CD4-positive, alpha-beta memory T cell (primary cell): ENCODE measurements at regions of chr13 and their contacts with region 1.

Region 1: GRCh38 chr13:37074703-37075102 is 15.2 kb upstream of the SUPT20H start:
- DNase-seq: peak in 4 of 5 donors; percentile 5 to 23 (median 12)
- H3K4me3 ChIP-seq: no peak overlapping the region
- H3K4me3 Mint-ChIP-seq: no peak overlapping the region
- H3K27ac ChIP-seq: no peak overlapping the region
- H3K27ac Mint-ChIP-seq: no peak overlapping the region
- H3K4me1 ChIP-seq: no peaks in the 10 kb centered on the region
- H3K4me1 Mint-ChIP-seq: no peaks in the 10 kb centered on the region
- H3K27me3 ChIP-seq: no peaks in the 10 kb centered on the region
- H3K27me3 Mint-ChIP-seq: peaks cover 0 to 2% of the 10 kb centered on the region in 2 donors

Region 2: GRCh38 chr13:37173214-37173613 is 98.5 kb after region 1 on chr13:
- CTCF ChIA-PET with region 1: no interaction called
- POLR2A ChIA-PET with region 1: no interaction called
- intact Hi-C with region 1: no loop called
- DNase-seq: no peak
- H3K4me3 ChIP-seq: no peak overlapping the region
- H3K4me3 Mint-ChIP-seq: no peak overlapping the region
- H3K27ac ChIP-seq: no peak overlapping the region
- H3K27ac Mint-ChIP-seq: no peak overlapping the region
- H3K4me1 ChIP-seq: no peaks in the 10 kb centered on the region
- H3K4me1 Mint-ChIP-seq: no peaks in the 10 kb centered on the region
- H3K27me3 ChIP-seq: no peaks in the 10 kb centered on the region
- H3K27me3 Mint-ChIP-seq: no peaks in the 10 kb centered on the region

Region 3: DNA sequence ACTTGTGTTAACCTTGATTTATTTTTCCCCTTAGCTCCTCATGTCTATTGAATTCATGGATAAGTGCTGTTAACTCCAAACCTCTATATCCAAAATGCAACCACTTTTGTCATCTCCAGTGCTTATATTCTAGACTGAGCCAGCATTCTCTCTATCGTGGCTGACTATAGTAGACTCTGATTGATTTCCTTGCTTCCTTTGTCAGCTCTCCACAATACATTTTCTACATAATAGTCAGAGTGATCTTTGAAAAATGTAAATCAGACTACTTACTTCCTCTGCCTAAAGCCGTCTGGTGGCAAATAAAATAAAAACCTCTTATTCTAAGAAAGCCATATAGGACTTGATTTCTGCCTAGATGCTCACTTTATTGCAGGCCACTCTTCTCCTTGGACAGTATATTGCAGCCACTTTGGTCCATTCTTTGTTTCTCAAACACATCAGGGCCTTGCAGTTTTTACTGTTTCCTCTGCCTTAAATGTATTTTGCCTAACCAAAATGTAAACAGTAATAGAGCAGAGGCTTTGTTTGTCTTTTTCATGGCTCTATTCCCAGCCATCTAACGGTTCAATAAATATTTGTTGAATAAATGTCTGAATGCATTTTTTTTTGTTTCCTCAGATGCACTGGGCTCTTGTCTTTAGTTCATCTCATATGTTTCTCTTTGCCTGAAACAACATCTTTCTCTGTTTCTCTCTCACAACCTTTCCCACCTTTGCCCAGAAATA is 274.4 kb after region 1 on chr13:
- CTCF ChIA-PET with region 1: no interaction called
- POLR2A ChIA-PET with region 1: no interaction called
- intact Hi-C with region 1: no loop called
- DNase-seq: no peak
- H3K4me3 ChIP-seq: no peak overlapping the region
- H3K4me3 Mint-ChIP-seq: no peak overlapping the region
- H3K27ac ChIP-seq: no peak overlapping the region
- H3K27ac Mint-ChIP-seq: no peak overlapping the region
- H3K4me1 ChIP-seq: no peaks in the 10 kb centered on the region
- H3K4me1 Mint-ChIP-seq: no peaks in the 10 kb centered on the region
- H3K27me3 ChIP-seq: no peaks in the 10 kb centered on the region
- H3K27me3 Mint-ChIP-seq: no peaks in the 10 kb centered on the region

Region 4: GRCh38 chr13:38763439-38764381 is 1689.0 kb after region 1 on chr13:
- CTCF ChIA-PET with region 1: no interaction called
- POLR2A ChIA-PET with region 1: no interaction called
- intact Hi-C with region 1: loop called (anchors 10 kb)
- DNase-seq: no peak
- H3K4me3 ChIP-seq: no peak overlapping the region
- H3K4me3 Mint-ChIP-seq: no peak overlapping the region
- H3K27ac ChIP-seq: no peak overlapping the region
- H3K27ac Mint-ChIP-seq: no peak overlapping the region
- H3K4me1 ChIP-seq: no peaks in the 10 kb centered on the region
- H3K4me1 Mint-ChIP-seq: peaks cover 0 to 6% (median 1%) of the 10 kb centered on the region in 4 donors
- H3K27me3 ChIP-seq: no peaks in the 10 kb centered on the region
- H3K27me3 Mint-ChIP-seq: peaks cover 0 to 7% of the 10 kb centered on the region in 2 donors

Region 5: GRCh38 chr13:38872693-38873092 is 1798.0 kb after region 1 on chr13:
- CTCF ChIA-PET with region 1: interaction called, 4 read pairs
- POLR2A ChIA-PET with region 1: no interaction called
- intact Hi-C with region 1: loop called (anchors 1 kb)
- DNase-seq: peak in 4 of 5 donors; percentile 6 to 18 (median 8)
- H3K4me3 ChIP-seq: no peak overlapping the region
- H3K4me3 Mint-ChIP-seq: peak overlapping the region in 1 of 8 donors; percentile 47
- H3K27ac ChIP-seq: no peak overlapping the region
- H3K27ac Mint-ChIP-seq: no peak overlapping the region
- H3K4me1 ChIP-seq: no peaks in the 10 kb centered on the region
- H3K4me1 Mint-ChIP-seq: peaks cover 0 to 1% (median 0%) of the 10 kb centered on the region in 4 donors
- H3K27me3 ChIP-seq: no peaks in the 10 kb centered on the region
- H3K27me3 Mint-ChIP-seq: peaks cover 2 to 5% of the 10 kb centered on the region in 2 donors